Caco-2 (cell line): ENCODE measurements at regions of chr1 and their contacts with region 1.

Region 1: GRCh38 chr1:904310-904950 is 19.3 kb upstream of the SAMD11 start:
- DNase-seq: peak; percentile 67 to 80
- H3K4me3 ChIP-seq: peak overlapping the region; percentile 35
- H3K4me3 Mint-ChIP-seq: peak overlapping the region; percentile 72
- H3K27ac Mint-ChIP-seq: no peak overlapping the region
- H3K4me1 ChIP-seq: no peaks in the 10 kb centered on the region
- H3K4me1 Mint-ChIP-seq: no peaks in the 10 kb centered on the region
- H3K27me3 ChIP-seq: no peaks in the 10 kb centered on the region
- H3K27me3 Mint-ChIP-seq: no peaks in the 10 kb centered on the region
- CTCF ChIP-seq: peak; percentile 47 to 90

Region 2: DNA sequence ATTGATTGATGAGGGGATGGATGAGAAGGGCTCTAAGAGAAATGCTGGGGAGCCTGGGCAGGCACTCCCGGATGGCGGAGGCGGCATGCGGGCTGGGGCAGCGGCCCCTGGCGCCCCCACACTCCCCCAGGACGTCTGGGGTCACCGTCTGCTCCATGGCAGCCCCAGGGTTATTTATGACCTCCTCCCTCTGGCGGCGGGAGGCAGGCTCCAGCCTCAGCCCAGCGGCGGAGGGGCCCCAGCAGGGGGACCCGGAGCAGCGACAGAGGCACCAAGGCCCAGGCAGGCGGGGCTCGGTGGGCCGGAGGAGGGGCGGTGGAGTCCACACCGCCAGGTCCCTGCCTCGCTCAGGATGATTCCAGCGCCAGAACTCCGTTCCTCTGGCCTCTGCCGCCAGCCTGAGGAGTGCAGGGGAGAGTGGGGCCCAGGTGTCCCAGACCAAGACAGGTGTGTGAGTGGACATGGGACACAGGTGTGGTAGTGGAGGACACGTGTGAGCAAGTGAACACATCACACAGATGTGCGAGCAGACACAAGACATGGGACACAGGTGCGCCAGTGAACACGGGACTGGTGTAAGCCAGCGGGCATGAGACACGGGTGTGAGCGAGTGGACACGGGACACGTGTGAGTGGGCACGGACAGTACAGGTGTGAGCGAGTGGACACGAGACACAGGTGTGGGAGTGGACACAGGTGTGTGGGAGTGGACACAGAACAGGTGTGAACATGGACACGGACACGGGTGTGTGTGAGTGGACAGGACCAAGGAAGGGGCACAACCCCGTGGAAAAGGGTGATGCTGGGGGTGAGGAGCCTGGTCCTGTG is 16.8 kb after region 1 on chr1:
- CTCF ChIA-PET with region 1: interaction called, 10 read pairs
- POLR2A ChIA-PET with region 1: no interaction called
- intact Hi-C with region 1: no loop called
- DNase-seq: peak; percentile 74 to 75
- H3K4me3 ChIP-seq: no peak overlapping the region
- H3K4me3 Mint-ChIP-seq: no peak overlapping the region
- H3K27ac Mint-ChIP-seq: no peak overlapping the region
- H3K4me1 ChIP-seq: peaks cover 13% of the 10 kb centered on the region
- H3K4me1 Mint-ChIP-seq: no peaks in the 10 kb centered on the region
- H3K27me3 ChIP-seq: 0 out of 2 replicates have a peak, but pooled peaks cover 3% of the 10 kb centered on the region
- H3K27me3 Mint-ChIP-seq: peaks cover 6% of the 10 kb centered on the region
- CTCF ChIP-seq: peak; percentile 41 to 59

Region 3: GRCh38 chr1:938088-938683 is 33.8 kb after region 1 on chr1:
- CTCF ChIA-PET with region 1: interaction called, 10 read pairs
- POLR2A ChIA-PET with region 1: no interaction called
- intact Hi-C with region 1: loop called (anchors 5 kb)
- DNase-seq: peak; percentile 64 to 73
- H3K4me3 ChIP-seq: no peak overlapping the region
- H3K4me3 Mint-ChIP-seq: no peak overlapping the region
- H3K27ac Mint-ChIP-seq: no peak overlapping the region
- H3K4me1 ChIP-seq: peaks cover 20% of the 10 kb centered on the region
- H3K4me1 Mint-ChIP-seq: peaks cover 6% of the 10 kb centered on the region
- H3K27me3 ChIP-seq: peaks cover 6% of the 10 kb centered on the region; the same call in 1 of the 2 replicates
- H3K27me3 Mint-ChIP-seq: peaks cover 6% of the 10 kb centered on the region
- CTCF ChIP-seq: peak; percentile 54 to 77